Natural killer cell (primary cell): ENCODE measurements at regions of chr2 and their contacts with region 1.

Region 1: GRCh38 chr2:53096351-53096750 is 671.3 kb upstream of the CHAC2 start:
- DNase-seq: no peak
- ATAC-seq: no peak
- H3K4me3 ChIP-seq: no peak overlapping the region
- H3K4me3 Mint-ChIP-seq: no peak overlapping the region
- H3K27ac ChIP-seq: no peak overlapping the region
- H3K27ac Mint-ChIP-seq: no peak overlapping the region
- H3K4me1 ChIP-seq: no peaks in the 10 kb centered on the region
- H3K4me1 Mint-ChIP-seq: no peaks in the 10 kb centered on the region
- H3K27me3 ChIP-seq: no peaks in the 10 kb centered on the region
- H3K27me3 Mint-ChIP-seq: no peaks in the 10 kb centered on the region
- CTCF ChIP-seq: no peak

Region 2: GRCh38 chr2:53127061-53127650 is 30.8 kb after region 1 on chr2:
- intact Hi-C with region 1: loop called (anchors 1 kb)
- DNase-seq: no peak
- ATAC-seq: no peak
- H3K4me3 ChIP-seq: no peak overlapping the region
- H3K4me3 Mint-ChIP-seq: no peak overlapping the region
- H3K27ac ChIP-seq: no peak overlapping the region
- H3K27ac Mint-ChIP-seq: no peak overlapping the region
- H3K4me1 ChIP-seq: no peaks in the 10 kb centered on the region
- H3K4me1 Mint-ChIP-seq: no peaks in the 10 kb centered on the region
- H3K27me3 ChIP-seq: no peaks in the 10 kb centered on the region
- H3K27me3 Mint-ChIP-seq: no peaks in the 10 kb centered on the region
- CTCF ChIP-seq: no peak